HEK293T (cell line): ENCODE measurements at regions of chr13 and their contacts with region 1.

Region 1: DNA sequence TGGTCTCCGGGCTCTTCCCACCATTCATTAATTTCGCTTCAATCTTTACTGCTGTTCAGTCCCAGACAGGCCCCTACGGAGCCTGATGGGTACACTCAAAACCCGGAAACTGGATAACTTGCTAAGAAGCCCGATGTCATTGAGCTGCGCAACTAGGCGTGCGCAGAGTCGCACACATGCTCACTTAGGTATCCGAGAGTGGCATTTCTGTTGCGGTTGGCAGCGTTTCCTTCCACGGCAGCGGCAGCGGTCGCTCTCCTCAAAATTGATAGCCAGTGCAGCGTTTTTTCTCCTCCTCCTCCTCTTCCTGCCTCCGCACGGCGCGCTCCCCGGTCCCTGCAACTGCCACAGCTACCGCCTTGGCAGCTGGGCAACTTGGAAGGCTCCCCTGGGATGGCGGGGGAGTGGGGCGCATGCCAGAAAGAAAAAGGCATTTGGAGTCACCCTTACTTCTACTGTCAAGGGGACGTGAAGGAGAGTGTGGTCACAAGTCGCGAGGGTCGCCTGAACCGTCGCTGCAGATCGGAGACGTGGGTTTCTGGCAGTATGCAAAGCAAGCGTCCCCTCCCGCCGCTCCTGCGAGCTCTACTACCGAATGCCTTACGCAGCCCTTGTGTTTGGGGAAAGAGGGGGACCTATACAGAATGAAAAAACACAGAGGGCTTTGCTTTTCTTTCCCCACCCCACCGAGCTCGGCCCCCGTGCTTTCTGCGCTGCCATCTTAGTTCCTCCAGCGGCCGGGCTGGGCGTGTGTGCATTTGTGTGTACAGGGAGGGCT is 2.4 kb upstream of the MYCBP2 start:
- DNase-seq: peak; percentile 89

Region 2: DNA sequence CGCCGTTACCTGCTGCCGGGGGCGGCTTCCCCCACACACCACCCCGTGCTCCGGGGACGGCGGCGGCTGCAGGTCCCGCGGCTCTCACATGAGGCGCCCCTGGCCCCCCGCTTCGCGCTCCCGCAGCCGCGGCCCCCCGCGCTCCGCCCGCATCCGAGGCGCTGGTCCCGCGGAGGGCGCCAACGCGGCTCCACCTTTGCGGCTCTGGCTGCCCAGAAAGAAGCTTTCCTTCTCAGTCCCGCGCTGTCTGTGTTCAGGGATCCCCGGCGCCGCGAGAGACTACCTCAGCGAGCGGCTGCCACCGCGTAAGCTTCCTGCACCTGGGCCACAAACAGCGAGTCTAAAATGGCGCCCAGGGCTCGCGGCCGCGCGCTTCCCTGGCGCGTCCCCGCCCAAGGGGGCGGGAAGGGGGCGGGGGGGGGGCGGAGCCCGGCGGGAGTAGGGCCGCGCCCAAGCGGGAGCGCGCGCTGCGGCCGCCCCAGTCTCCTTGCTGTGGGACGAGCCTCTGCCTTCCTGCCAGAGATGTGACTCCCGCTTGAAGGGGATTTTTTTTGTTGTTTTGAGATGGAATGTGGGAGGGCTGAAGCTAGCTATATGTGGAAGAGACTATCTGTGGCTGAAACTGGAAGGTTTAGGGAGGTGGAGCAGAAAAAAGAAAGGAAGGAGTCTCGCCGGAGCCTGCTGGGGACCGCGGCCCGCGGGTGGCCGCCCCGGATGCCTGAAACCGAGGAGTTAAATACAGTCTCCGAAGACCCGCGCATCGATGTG is 302.3 kb before region 1 on chr13 and contains the start of gene FBXL3:
- CTCF ChIA-PET with region 1: no interaction called
- POLR2A ChIA-PET with region 1: interaction called, 11 read pairs
- DNase-seq: peak; percentile 99

Region 3: DNA sequence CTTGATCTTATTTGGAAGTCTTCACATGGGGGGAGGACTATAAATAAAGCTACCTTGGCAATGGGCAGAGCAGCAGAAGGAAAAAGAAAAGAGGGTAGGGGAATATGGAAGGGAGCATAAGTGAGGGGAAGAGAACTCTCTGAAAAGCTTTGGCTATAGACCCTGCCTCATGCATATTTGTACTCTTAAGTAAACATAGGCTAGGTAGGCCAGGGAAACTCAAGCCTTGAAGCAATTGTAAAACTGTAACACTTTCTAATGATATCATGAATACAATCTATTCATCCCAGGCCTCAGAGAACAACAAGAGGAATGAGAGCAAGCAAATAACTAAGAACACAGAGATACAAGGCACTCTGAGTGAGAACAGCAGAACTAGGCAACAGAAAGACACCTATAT is 22.9 kb before region 1 on chr13:
- CTCF ChIA-PET with region 1: interaction called, 3 read pairs
- POLR2A ChIA-PET with region 1: interaction called, 11 read pairs
- DNase-seq: no peak

Region 4: DNA sequence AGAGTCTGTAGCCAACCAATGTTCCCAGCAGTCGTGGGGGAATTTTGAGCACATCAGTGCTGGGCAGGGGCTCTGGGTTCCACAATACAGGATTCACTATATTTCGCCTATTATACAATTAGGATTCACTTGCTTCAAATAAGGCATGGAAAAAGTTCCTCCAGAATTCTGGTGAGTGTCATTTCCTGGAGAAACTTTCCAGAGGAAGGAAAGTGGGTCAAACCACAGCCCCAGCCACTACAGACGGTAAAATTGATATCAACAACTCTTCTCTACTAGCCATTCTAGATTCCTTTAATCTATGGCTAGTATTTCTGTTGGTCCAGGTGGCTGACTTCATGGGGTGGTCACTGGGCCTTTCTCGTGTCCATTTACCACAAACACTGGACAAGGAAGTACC is 12.9 kb before region 1 on chr13:
- CTCF ChIA-PET with region 1: interaction called, 5 read pairs
- POLR2A ChIA-PET with region 1: interaction called, 12 read pairs
- DNase-seq: no peak

Region 5: GRCh38 chr13:77343841-77344240 is 14.5 kb after region 1 on chr13:
- CTCF ChIA-PET with region 1: no interaction called
- POLR2A ChIA-PET with region 1: interaction called, 17 read pairs
- DNase-seq: no peak

Region 6: GRCh38 chr13:77480066-77480465 is 150.7 kb after region 1 on chr13:
- CTCF ChIA-PET with region 1: interaction called, 8 read pairs
- POLR2A ChIA-PET with region 1: interaction called, 53 read pairs
- DNase-seq: no peak

Region 7: DNA sequence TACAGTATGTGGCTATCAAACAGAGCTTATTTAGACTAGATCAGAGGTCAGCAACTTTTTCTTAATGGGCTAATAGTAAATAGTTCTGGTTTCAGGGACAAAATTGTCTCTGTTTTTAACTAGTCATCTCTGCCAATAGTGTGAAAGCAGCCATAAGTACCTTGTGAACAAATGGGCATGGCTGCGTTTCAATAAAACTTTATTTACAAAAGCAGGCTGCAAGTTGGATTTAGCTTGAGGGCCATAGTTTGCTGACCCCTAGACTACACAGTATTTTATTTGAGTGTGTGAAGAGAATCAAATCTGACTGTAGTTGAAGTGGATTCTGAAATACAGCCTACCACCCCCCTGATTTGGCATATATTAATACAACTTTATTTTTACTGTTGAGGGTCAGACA is 281.7 kb after region 1 on chr13:
- CTCF ChIA-PET with region 1: no interaction called
- POLR2A ChIA-PET with region 1: no interaction called
- DNase-seq: no peak

Region 8: GRCh38 chr13:77697217-77698103 is 368.1 kb after region 1 on chr13 and contains the start of gene SLAIN1:
- CTCF ChIA-PET with region 1: no interaction called
- POLR2A ChIA-PET with region 1: interaction called, 10 read pairs
- DNase-seq: peak; percentile 99

Region 9: GRCh38 chr13:78299832-78300623 is 970.7 kb after region 1 on chr13:
- CTCF ChIA-PET with region 1: no interaction called
- POLR2A ChIA-PET with region 1: no interaction called
- DNase-seq: no peak